Activated naive CD4-positive, alpha-beta T cell treated with anti-CD3 and anti-CD28 coated beads for 36 hours (primary cell): ENCODE measurements at regions of chr1 and their contacts with region 1.

Region 1: DNA sequence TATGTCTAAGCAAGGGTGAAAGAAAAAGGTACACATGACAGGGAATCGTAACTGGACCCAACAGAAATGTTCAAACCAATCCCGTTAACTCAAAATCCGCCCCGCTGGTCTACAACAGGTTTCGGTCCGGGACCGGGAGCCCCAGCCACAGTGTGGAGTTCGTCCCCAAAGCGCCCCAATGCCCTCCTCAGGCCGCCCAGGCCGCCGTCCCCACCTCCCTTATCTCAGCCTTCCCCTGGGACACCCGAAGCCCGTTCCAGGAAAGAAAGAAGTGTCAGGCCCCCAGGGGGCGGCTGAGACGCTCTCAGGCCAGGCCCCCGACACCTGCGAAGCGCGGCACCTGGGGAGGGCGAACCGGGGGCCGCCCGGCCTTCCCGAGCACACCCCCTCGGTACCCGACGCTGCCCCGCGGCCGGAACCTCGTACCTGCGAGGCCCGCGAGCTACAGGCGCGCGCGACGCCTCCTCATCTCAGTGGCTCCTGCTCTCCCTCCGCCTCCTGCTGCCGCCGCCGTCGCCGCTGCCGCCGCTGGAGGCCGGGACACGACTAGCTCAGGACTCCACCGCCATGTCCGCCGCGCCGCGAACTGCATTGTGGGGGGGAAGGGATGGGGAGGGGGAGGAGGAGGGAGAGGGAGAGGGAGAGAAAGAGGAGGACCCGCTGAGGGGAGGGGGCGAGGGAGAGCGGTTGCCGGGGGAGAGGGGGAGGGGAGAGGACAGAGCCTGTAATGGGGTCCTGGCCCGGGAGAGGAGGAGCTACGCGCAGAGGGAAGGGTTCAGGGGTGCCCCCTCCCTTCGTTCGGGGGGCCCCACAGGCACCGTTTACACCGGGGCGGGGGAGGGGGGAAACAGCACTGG is at the start of gene TUT4:
- DNase-seq: peak; percentile 88
- H3K4me3 Mint-ChIP-seq: peak within 1 kb of the TSS; percentile 50
- H3K27ac Mint-ChIP-seq: no peak within 1 kb of the TSS
- H3K4me1 Mint-ChIP-seq: peaks cover 31% of the 10 kb centered on the region
- H3K27me3 Mint-ChIP-seq: no peaks in the 10 kb centered on the region
- total RNA-seq, gene TUT4: 48.1 to 51.2 TPM

Region 2: DNA sequence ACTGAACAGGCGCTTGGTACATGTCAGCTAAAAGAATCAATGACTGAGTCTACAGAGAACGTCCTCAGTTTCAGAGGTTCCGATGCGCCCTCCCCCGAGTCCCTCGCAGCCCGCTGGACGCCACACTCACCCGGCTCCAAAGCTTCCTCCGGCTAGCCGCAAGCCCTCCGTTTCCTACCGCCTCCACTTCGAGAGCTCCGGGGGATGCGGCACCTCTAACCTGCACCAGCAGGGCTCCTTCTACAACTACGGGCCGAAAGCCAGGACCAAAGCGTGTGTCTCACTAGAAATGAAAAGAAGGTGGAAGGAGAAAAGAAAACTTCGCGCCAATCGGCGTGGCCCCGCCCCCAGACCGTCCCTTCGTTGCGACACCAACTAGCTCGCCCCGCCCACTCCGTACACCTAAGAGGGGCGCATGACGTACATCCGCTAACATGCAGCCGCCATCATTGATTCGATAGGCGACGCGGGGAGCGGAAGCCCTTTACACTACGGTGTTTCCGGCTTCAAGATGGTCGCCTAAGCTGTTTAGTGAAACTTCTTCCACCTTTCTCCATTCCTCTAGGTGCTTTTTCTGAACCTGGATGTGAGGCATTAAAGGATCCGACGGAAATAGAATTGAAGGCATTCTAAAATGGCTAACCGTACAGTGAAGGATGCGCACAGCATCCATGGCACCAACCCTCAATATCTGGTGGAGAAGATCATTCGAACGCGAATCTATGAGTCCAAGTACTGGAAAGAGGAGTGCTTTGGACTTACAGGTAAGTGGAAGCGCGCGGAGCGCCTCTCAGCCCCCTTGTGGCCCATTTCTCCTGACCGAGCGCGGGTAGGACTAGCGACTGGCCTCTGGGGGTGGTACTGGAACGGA is 148.4 kb before region 1 on chr1 and contains the starts of genes ORC1 and PRPF38A:
- CTCF ChIA-PET with region 1: interaction called, 5 read pairs
- intact Hi-C with region 1: loop called (anchors 1 kb)
- DNase-seq: peak; percentile 99
- H3K4me3 Mint-ChIP-seq: peak within 1 kb of the TSS; percentile 100
- H3K27ac Mint-ChIP-seq: peak within 1 kb of the TSS; percentile 99
- H3K4me1 Mint-ChIP-seq: peaks cover 45% of the 10 kb centered on the region
- H3K27me3 Mint-ChIP-seq: no peaks in the 10 kb centered on the region
- total RNA-seq, gene ORC1: 46.9 to 49.3 TPM
- total RNA-seq, gene PRPF38A: 86.0 to 91.8 TPM

Region 3: GRCh38 chr1:52520148-52520547 is 32.6 kb before region 1 on chr1:
- CTCF ChIA-PET with region 1: interaction called, 3 read pairs
- intact Hi-C with region 1: loop called (anchors 1 kb)
- DNase-seq: no peak
- H3K4me3 Mint-ChIP-seq: no peak overlapping the region
- H3K27ac Mint-ChIP-seq: peak overlapping the region; percentile 59
- H3K4me1 Mint-ChIP-seq: peaks cover 31% of the 10 kb centered on the region
- H3K27me3 Mint-ChIP-seq: no peaks in the 10 kb centered on the region

Region 4: GRCh38 chr1:52636721-52637695 is 84.3 kb after region 1 on chr1:
- CTCF ChIA-PET with region 1: no interaction called
- intact Hi-C with region 1: loop called (anchors 1 kb)
- DNase-seq: peak; percentile 84
- H3K4me3 Mint-ChIP-seq: peak overlapping the region; percentile 73
- H3K27ac Mint-ChIP-seq: peak overlapping the region; percentile 98
- H3K4me1 Mint-ChIP-seq: peaks cover 79% of the 10 kb centered on the region
- H3K27me3 Mint-ChIP-seq: no peaks in the 10 kb centered on the region